Aorta (tissue), 5 donors: ENCODE measurements at regions of chr1 and their contacts with region 1.

Region 1: DNA sequence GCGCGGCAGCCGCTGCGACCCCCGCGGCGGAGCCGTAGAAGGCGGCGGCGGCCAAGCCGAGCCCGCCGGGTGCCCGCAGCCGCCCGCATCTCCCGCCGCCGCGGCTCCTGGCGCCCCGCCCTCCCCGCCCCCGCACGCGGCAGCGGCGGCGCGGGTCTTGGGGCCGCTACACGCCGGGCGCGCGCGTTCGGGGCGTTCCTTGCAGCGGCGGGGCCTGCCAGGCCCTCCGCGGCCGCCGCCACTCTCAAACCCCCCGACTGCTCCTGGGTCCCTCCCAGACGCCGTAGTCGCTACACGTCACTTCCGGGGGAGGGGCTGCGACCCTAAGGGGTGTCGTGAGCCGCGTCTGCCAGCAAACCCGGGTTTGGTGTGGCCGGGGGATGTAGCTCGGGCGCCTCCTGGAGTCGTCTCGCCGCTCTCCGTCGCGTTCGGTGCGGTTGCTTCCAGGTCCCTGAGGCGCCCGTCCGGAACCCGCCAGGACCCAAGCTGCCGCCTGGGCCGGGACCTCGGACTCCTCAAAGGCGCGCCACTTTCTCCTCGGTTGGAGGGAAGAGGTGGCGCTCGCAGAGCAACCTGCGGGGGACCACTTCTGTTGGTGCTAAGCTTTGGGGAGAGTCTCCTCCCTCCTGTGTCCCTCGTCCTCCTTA is at the start of gene ELK4:
- DNase-seq: peak; percentile 99 to 100
- ATAC-seq: peak; percentile 99
- H3K4me3 ChIP-seq: peak within 1 kb of the TSS; percentile 95 to 100
- H3K27ac ChIP-seq: peak within 1 kb of the TSS; percentile 91 to 100
- H3K4me1 ChIP-seq: peaks cover 3 to 4% of the 10 kb centered on the region in 2 donors
- H3K27me3 ChIP-seq: no peaks in the 10 kb centered on the region
- total RNA-seq, gene ELK4: 66.1 to 90.4 TPM

Region 2: DNA sequence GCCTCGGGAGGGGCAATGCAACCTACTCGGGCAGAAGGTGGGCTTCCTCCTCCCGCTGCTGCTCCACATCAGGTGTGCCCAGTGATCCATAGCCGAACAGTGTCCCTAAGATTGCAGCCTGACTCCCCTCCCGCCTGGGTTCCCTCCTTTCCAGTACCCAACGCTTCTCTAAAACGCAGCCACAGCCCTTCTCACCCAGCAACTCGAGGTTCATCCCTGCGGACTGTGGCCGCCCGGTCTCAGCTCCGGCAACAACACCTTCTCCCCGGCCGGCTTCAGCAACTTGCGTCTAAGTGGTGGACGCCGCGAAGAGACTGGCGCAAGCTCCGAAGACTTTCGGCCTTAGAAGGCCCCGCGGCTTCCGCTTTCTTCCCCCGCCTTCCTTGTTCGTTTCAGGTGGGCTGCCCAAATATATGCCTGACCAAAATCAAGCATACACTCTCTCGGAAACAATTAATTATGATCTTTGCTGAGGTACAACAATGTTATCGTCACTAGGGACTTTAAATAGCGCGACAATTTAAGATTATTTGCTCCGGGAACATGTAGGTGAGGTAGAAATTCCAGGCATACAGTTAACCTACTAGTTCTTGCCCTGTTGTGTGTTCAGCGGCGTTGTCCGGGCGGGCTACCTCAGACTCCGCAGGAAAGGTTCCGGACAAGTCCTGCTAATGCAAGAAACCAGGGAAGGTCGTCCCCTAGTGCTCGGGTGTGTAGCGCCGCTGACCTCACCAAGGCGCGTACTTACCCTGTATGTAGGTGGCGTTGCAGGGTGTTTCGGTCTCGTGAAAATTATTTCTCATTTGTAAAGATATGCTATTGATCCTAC is 510.0 kb before region 1 on chr1 and contains the start of gene RBBP5:
- intact Hi-C with region 1: loop called in 1 of 2 experiments (anchors 5 kb)
- DNase-seq: peak; percentile 96 to 97
- ATAC-seq: peak; percentile 99
- H3K4me3 ChIP-seq: peak within 1 kb of the TSS; percentile 80 to 85
- H3K27ac ChIP-seq: peak within 1 kb of the TSS; percentile 27 to 29
- H3K4me1 ChIP-seq: peaks cover 0 to 3% of the 10 kb centered on the region in 2 donors
- H3K27me3 ChIP-seq: no peaks in the 10 kb centered on the region
- total RNA-seq, gene RBBP5: 9.9 to 15.4 TPM

Region 3: DNA sequence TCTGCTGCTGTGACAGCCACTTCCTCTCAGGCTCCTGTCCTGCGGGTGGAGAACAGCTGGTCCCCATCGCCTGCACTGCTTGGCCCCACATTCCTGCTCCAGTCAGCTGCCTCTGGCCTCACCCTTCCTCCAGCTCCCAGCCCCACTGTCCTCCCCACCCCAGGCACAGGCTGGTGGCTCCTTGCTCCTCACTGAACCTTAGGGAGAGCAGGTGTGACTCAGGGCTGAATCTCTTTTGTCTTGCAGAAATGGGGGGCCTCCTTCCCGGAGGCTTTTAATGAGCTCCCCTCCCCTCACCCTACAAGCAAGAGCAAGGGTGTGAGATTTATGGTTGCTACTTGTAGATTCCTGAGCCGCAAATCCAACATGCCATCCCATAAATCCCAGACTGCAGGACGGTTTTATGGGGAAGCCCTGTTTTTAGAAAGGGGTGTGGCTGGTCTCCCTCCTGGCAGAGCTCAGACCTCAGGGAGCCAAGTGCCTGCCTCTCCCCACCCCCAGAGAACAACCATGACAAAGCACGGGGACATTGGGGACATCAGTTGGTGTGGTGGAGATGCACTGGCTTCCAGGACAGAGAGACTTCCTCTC is 112.2 kb before region 1 on chr1:
- intact Hi-C with region 1: no loop called
- DNase-seq: no peak
- ATAC-seq: no peak
- H3K4me3 ChIP-seq: no peak overlapping the region
- H3K27ac ChIP-seq: no peak overlapping the region
- H3K4me1 ChIP-seq: no peaks in the 10 kb centered on the region
- H3K27me3 ChIP-seq: no peaks in the 10 kb centered on the region

Region 4: GRCh38 chr1:205598841-205599668 is 32.8 kb before region 1 on chr1:
- intact Hi-C with region 1: loop called (anchors 2 to 5 kb)
- DNase-seq: peak; percentile 89 to 90
- ATAC-seq: peak; percentile 88
- H3K4me3 ChIP-seq: no peak overlapping the region
- H3K27ac ChIP-seq: peak overlapping the region; percentile 4 to 33
- H3K4me1 ChIP-seq: no peaks in the 10 kb centered on the region
- H3K27me3 ChIP-seq: no peaks in the 10 kb centered on the region